ENCODE measurements at regions of chr18 and their contacts with region 1.

Region 1: GRCh38 chr18:50878345-50879301 is at the start of gene ME2:
- DNase-seq: peak; percentile 74 to 90
- ATAC-seq: peak; percentile 96 to 99
- H3K4me3 ChIP-seq: peak within 1 kb of the TSS; percentile 91
- H3K27ac ChIP-seq: peak within 1 kb of the TSS; percentile 95 to 100
- H3K4me1 ChIP-seq: peaks cover 13% of the 10 kb centered on the region
- CTCF ChIP-seq: no peak
- EP300 ChIP-seq: no peak
- POLR2A ChIP-seq: peak; percentile 54
- RAD21 ChIP-seq: no peak
- polyA plus RNA-seq, gene ME2: 72.2 and 88.0 TPM in 2 replicates

Region 2: GRCh38 chr18:50866765-50867164 is 11.9 kb before region 1 on chr18:
- CTCF ChIA-PET with region 1: interaction called, 4 read pairs
- POLR2A ChIA-PET with region 1: interaction called, 28 read pairs
- DNase-seq: no peak
- ATAC-seq: peak; percentile 52 to 79; a peak in 3 of 6 replicates
- H3K4me3 ChIP-seq: no peak overlapping the region
- H3K27ac ChIP-seq: no peak overlapping the region; a peak in 1 of 6 replicates
- H3K4me1 ChIP-seq: peaks cover 32% of the 10 kb centered on the region
- CTCF ChIP-seq: peak; percentile 35; the same call in 2 of the 3 replicates
- EP300 ChIP-seq: no peak
- POLR2A ChIP-seq: no peak
- RAD21 ChIP-seq: peak; percentile 58 to 60

Region 3: GRCh38 chr18:50967714-50968661 is 89.4 kb after region 1 on chr18 and contains the start of gene ELAC1:
- CTCF ChIA-PET with region 1: no interaction called
- POLR2A ChIA-PET with region 1: interaction called, 15 read pairs
- DNase-seq: peak; percentile 50 to 82
- ATAC-seq: peak; percentile 98 to 99
- H3K4me3 ChIP-seq: peak within 1 kb of the TSS; percentile 64
- H3K27ac ChIP-seq: peak within 1 kb of the TSS; percentile 88 to 100
- H3K4me1 ChIP-seq: peaks cover 21% of the 10 kb centered on the region
- CTCF ChIP-seq: no peak
- EP300 ChIP-seq: no peak
- POLR2A ChIP-seq: peak; percentile 77
- RAD21 ChIP-seq: no peak
- polyA plus RNA-seq, gene ELAC1: 6.0 and 6.6 TPM in 2 replicates

Region 4: DNA sequence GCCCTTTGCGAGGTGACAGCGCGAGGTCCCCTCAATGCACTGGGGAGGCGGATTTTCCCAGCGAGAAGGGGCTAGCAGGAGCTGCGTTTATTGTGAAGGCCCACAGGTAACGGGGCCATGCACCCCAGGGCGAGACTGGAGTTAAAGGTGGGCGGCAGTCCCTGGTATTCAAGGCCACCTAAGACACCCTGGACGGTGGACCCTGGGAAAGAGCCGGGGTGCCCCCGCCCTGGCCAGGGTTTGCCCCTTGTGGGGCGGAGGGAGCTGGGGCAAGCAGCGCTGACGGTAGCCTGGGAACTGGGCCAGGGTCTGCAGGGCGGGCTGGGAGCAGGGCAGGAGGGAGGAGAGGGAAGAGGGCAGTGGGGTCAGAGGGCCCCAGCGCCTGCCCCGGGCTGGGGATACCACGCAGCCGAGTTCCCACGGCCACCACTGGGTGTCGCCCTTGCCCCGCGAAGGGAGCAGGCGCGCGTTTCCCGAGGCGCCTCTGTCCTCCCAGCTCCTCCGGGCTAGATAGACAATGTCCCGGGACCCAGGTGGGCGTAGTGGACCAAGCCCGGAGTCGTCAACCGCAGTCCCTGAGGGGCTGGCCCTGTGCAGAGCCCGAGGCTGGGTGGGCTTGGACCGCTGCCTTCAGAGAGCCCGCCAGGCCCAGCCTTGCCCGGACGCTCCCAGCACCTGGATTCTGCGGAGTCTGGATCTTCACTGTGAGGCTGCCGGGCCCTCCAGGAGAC is 231.6 kb after region 1 on chr18:
- CTCF ChIA-PET with region 1: no interaction called
- POLR2A ChIA-PET with region 1: no interaction called
- DNase-seq: peak; percentile 31 to 52
- ATAC-seq: peak; percentile 98 to 99
- H3K4me3 ChIP-seq: no peak overlapping the region
- H3K27ac ChIP-seq: peak overlapping the region in 1 of 2 experiments; percentile 60; a peak in 2 of 6 replicates
- H3K4me1 ChIP-seq: peaks cover 6% of the 10 kb centered on the region; the same call in 2 of the 3 replicates
- CTCF ChIP-seq: peak; percentile 69
- EP300 ChIP-seq: no peak
- POLR2A ChIP-seq: no peak
- RAD21 ChIP-seq: peak; percentile 88 to 94

Measured in A549 (cell line).